ENCODE measurements at regions of chr14 and their contacts with region 1.

Region 1: GRCh38 chr14:63470962-63471793 is 72.0 kb downstream of the PPP2R5E start:
- DNase-seq: peak; percentile 68
- ATAC-seq: peak; percentile 86
- H3K4me3 ChIP-seq: peak overlapping the region; percentile 20; the same call in 1 of the 2 replicates
- H3K27ac ChIP-seq: peak overlapping the region; percentile 69
- H3K4me1 ChIP-seq: peaks cover 22% of the 10 kb centered on the region
- H3K27me3 ChIP-seq: no peaks in the 10 kb centered on the region
- CTCF ChIP-seq: no peak
- EP300 ChIP-seq: peak; percentile 79 to 91
- POLR2A ChIP-seq: no peak
- RAD21 ChIP-seq: no peak

Region 2: GRCh38 chr14:63454863-63455622 is 16.1 kb before region 1 on chr14:
- CTCF ChIA-PET with region 1: interaction called, 4 read pairs
- POLR2A ChIA-PET with region 1: interaction called, 4 read pairs
- RAD21 ChIA-PET with region 1: interaction called, 3 read pairs
- SMC1A ChIA-PET with region 1: interaction called, 36 read pairs
- in situ Hi-C with region 1: no loop called
- intact Hi-C with region 1: no loop called
- DNase-seq: no peak
- ATAC-seq: peak; percentile 83
- H3K4me3 ChIP-seq: no peak overlapping the region
- H3K27ac ChIP-seq: no peak overlapping the region
- H3K4me1 ChIP-seq: no peaks in the 10 kb centered on the region; the same call in 1 of the 2 replicates
- H3K27me3 ChIP-seq: no peaks in the 10 kb centered on the region
- CTCF ChIP-seq: no peak
- EP300 ChIP-seq: no peak
- POLR2A ChIP-seq: no peak
- RAD21 ChIP-seq: no peak

Region 3: GRCh38 chr14:63483315-63483714 is 12.1 kb after region 1 on chr14:
- CTCF ChIA-PET with region 1: interaction called, 4 read pairs
- POLR2A ChIA-PET with region 1: interaction called, 6 read pairs
- RAD21 ChIA-PET with region 1: interaction called, 14 read pairs
- SMC1A ChIA-PET with region 1: interaction called, 31 read pairs
- in situ Hi-C with region 1: no loop called
- intact Hi-C with region 1: no loop called
- DNase-seq: no peak
- ATAC-seq: no peak
- H3K4me3 ChIP-seq: no peak overlapping the region
- H3K27ac ChIP-seq: 0 out of 2 replicates have a peak overlapping the region, but pooled peaks have one; percentile 73
- H3K4me1 ChIP-seq: peaks cover 28% of the 10 kb centered on the region
- H3K27me3 ChIP-seq: no peaks in the 10 kb centered on the region
- CTCF ChIP-seq: no peak
- EP300 ChIP-seq: no peak
- POLR2A ChIP-seq: no peak
- RAD21 ChIP-seq: no peak

Region 4: GRCh38 chr14:63510538-63510937 is 39.4 kb after region 1 on chr14:
- CTCF ChIA-PET with region 1: interaction called, 4 read pairs
- POLR2A ChIA-PET with region 1: interaction called, 7 read pairs
- RAD21 ChIA-PET with region 1: interaction called, 11 read pairs
- SMC1A ChIA-PET with region 1: interaction called, 17 read pairs
- in situ Hi-C with region 1: no loop called
- intact Hi-C with region 1: no loop called
- DNase-seq: peak; percentile 66
- ATAC-seq: peak; percentile 86
- H3K4me3 ChIP-seq: no peak overlapping the region
- H3K27ac ChIP-seq: peak overlapping the region; percentile 5
- H3K4me1 ChIP-seq: peaks cover 14% of the 10 kb centered on the region
- H3K27me3 ChIP-seq: no peaks in the 10 kb centered on the region
- CTCF ChIP-seq: no peak
- EP300 ChIP-seq: no peak
- POLR2A ChIP-seq: no peak
- RAD21 ChIP-seq: no peak

Measured in GM12878 (cell line).